Activated CD4-positive, alpha-beta memory T cell treated with anti-CD3 and anti-CD28 coated beads, Interleukin-2, amount 10 ng/mL, durations not matched to agents 7 days and 5 days (primary cell): ENCODE measurements at regions of chr13 and their contacts with region 1.

Region 1: GRCh38 chr13:99335603-99336002 is 28.4 kb upstream of the GPR183 start:
- DNase-seq: no peak
- H3K4me3 Mint-ChIP-seq: no peak overlapping the region
- H3K27ac Mint-ChIP-seq: no peak overlapping the region
- H3K4me1 Mint-ChIP-seq: peaks cover 45% of the 10 kb centered on the region
- H3K27me3 Mint-ChIP-seq: no peaks in the 10 kb centered on the region

Region 2: DNA sequence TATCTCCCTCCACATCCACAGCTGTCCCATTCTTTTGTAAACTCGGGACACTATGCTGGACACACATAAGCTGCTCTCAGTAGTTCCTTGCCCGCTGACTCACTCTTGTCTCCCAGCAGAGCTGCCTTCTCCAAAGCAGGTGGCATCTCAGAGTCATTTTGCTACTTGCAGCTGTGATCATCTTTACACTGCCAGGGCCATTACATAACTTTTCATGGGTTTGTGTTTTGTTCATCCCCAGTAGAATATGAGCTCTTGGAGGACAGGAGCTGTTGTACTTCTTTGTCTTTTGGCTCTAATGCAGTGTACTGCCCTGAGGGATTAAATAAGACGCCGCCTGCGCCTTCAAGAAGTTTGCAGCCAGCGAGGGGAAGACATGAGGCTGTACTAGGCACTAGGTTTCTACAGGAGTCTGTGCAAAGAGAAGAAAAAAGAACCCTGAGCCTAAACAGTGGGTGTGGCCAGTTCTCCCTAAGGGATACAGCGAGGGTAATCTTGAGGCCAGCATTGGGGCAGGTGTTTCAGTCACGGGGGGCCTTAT is 12.4 kb after region 1 on chr13:
- CTCF ChIA-PET with region 1: interaction called, 9 read pairs
- POLR2A ChIA-PET with region 1: interaction called, 23 read pairs
- DNase-seq: no peak
- H3K4me3 Mint-ChIP-seq: no peak overlapping the region
- H3K27ac Mint-ChIP-seq: no peak overlapping the region
- H3K4me1 Mint-ChIP-seq: peaks cover 47% of the 10 kb centered on the region
- H3K27me3 Mint-ChIP-seq: no peaks in the 10 kb centered on the region